Mammary epithelial cell (primary cell): ENCODE measurements at regions of chr3 and their contacts with region 1.

Region 1: GRCh38 chr3:182683453-182683852 is 109.9 kb upstream of the ATP11B start:
- DNase-seq: peak; percentile 72
- H3K4me3 ChIP-seq: no peak overlapping the region
- H3K27ac ChIP-seq: no peak overlapping the region
- H3K4me1 ChIP-seq: peaks cover 18% of the 10 kb centered on the region
- H3K27me3 ChIP-seq: no peaks in the 10 kb centered on the region
- CTCF ChIP-seq: peak; percentile 92 to 94

Region 2: DNA sequence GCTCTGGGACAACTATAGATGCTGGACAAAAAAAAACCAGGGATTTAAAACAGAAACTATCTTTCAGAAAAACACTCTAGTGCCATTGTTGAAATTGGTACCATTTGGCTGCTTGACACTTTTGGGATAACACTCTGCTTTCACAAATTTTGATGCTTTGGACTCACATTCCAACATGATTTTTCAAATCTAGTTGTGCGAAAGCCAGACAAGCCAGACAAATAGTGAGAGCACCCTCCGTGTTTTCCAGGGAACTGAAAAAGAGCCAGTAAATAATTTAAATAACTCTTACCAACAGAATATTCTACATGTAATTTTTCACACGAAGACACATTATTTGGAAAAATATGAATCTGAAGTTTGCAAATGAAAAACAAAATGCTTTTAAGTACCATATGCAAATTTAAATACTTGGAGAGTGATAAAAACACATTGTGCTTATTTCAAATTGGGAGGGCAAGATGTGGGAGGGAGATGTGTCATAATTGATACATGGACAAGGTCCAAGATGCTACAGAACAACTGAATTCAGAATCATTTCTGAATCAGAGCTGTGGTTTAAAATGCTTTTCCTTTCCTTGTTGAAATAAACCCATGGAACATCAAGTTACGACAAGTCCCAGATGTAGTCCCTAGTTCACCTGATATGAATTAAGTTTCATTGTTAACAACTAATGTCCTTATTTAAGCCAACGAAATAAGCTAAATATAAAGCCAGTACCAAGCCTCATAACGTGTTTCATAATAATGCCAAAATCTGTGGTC is 1116.0 kb before region 1 on chr3:
- CTCF ChIA-PET with region 1: no interaction called
- dilution Hi-C with region 1: no loop called
- in situ Hi-C with region 1: no loop called
- intact Hi-C with region 1: loop called (anchors 10 kb)
- DNase-seq: peak; percentile 93
- H3K4me3 ChIP-seq: peak overlapping the region in 2 of 3 experiments; percentile 8 to 24
- H3K27ac ChIP-seq: peak overlapping the region; percentile 70
- H3K4me1 ChIP-seq: peaks cover 23% of the 10 kb centered on the region
- H3K27me3 ChIP-seq: no peaks in the 10 kb centered on the region
- CTCF ChIP-seq: no peak

Region 3: GRCh38 chr3:181709537-181710279 is 973.7 kb before region 1 on chr3:
- CTCF ChIA-PET with region 1: no interaction called
- dilution Hi-C with region 1: no loop called
- in situ Hi-C with region 1: loop called (anchors 10 kb)
- intact Hi-C with region 1: loop called (anchors 1 kb)
- DNase-seq: peak; percentile 40
- H3K4me3 ChIP-seq: peak overlapping the region in 2 of 3 experiments; percentile 26 to 33
- H3K27ac ChIP-seq: no peak overlapping the region
- H3K4me1 ChIP-seq: peaks cover 15% of the 10 kb centered on the region
- H3K27me3 ChIP-seq: peaks cover 58% of the 10 kb centered on the region
- CTCF ChIP-seq: peak; percentile 53 to 66

Region 4: GRCh38 chr3:181948286-181948685 is 735.2 kb before region 1 on chr3:
- CTCF ChIA-PET with region 1: no interaction called
- dilution Hi-C with region 1: no loop called
- in situ Hi-C with region 1: loop called (anchors 10 to 25 kb)
- intact Hi-C with region 1: loop called (anchors 2 kb)
- DNase-seq: peak; percentile 11
- H3K4me3 ChIP-seq: no peak overlapping the region
- H3K27ac ChIP-seq: no peak overlapping the region
- H3K4me1 ChIP-seq: no peaks in the 10 kb centered on the region
- H3K27me3 ChIP-seq: no peaks in the 10 kb centered on the region
- CTCF ChIP-seq: peak; percentile 47 to 92

Region 5: DNA sequence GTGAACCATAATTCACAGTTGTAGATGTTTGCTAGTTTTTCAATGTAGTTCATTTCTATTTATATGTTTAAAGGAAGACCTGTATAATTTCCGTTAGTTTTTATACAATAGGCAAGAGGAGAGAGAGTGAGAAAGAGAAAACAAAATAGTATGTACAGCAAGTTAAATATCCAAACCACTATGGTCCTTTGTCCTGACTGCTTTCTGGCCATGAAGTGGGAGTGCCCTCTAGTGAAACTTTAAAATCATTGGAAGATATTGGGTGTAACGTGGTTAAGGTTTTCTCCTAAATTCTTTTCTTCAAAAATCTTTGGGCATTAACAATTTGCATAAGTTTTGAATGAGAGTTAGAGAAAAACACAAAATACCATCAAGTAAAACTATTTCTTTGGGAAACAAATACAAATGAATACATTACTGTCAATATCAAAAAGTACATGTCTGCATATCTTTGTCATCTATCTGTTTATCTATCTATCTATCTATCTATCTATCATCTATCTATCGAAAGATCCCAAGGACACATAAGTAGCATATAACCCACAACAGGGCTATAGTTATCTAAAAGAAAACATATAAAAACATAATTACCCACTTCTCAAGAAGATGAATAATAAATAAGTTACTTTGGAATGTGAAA is 424.8 kb before region 1 on chr3:
- CTCF ChIA-PET with region 1: no interaction called
- dilution Hi-C with region 1: loop called (anchors 25 kb)
- in situ Hi-C with region 1: loop called (anchors 10 to 25 kb)
- intact Hi-C with region 1: loop called (anchors 2 kb)
- DNase-seq: peak; percentile 31
- H3K4me3 ChIP-seq: no peak overlapping the region
- H3K27ac ChIP-seq: no peak overlapping the region
- H3K4me1 ChIP-seq: peaks cover 3% of the 10 kb centered on the region
- H3K27me3 ChIP-seq: no peaks in the 10 kb centered on the region
- CTCF ChIP-seq: peak; percentile 59 to 83

Region 6: DNA sequence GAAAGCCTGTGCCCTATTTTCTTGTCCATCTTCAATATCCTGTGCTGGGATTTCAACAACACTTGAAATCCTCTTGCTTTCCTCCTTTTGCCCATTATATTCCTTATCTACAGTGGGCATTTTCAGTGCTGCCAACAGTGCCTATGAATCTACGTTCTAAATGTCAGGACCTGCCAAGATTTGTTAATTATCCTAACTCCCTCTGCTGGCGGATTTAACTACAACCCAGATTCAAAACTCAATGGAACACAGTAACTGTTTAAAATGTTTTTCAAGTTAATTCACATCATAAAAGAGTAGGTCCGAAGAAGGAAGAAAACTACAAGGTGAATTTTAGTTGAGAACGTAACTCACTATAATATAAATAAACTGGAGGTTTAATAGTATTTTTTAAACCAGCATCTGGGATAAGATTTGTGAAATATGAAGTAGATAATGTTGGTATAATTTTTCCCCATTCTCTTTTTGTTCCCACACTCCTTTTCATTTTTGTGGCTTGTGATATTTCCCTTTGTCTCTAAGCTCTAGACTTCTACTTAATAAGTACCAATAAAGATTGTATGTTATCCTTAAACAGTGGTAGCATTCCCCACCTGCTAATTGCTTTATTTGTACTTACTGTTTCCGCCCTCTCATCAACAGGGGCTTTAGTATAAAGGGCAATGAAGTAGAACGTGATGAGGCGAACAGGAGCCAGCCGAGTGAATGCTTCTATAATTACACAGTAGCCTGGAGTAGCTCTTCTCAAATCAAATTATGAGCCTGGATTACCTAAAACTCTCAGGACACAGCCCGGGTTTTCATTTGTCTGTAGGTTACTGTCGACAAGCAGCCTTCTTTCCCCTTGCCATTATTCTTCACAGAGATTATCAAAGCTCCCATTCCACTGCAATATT is 192.6 kb before region 1 on chr3:
- CTCF ChIA-PET with region 1: no interaction called
- dilution Hi-C with region 1: no loop called
- in situ Hi-C with region 1: no loop called
- intact Hi-C with region 1: loop called (anchors 1 kb)
- DNase-seq: peak; percentile 31
- H3K4me3 ChIP-seq: no peak overlapping the region
- H3K27ac ChIP-seq: no peak overlapping the region
- H3K4me1 ChIP-seq: no peaks in the 10 kb centered on the region
- H3K27me3 ChIP-seq: no peaks in the 10 kb centered on the region
- CTCF ChIP-seq: peak; percentile 52 to 63